A673 (cell line): ENCODE measurements at regions of chr4 and their contacts with region 1.

Region 1: GRCh38 chr4:179076865-179077264 is 1634.6 kb upstream of the AGA start:
- DNase-seq: no peak
- H3K4me3 ChIP-seq: no peak overlapping the region
- H3K27ac ChIP-seq: no peak overlapping the region
- H3K4me1 ChIP-seq: no peaks in the 10 kb centered on the region
- H3K27me3 ChIP-seq: no peaks in the 10 kb centered on the region
- CTCF ChIP-seq: no peak

Region 2: GRCh38 chr4:178356725-178357124 is 720.1 kb before region 1 on chr4:
- CTCF ChIA-PET with region 1: no interaction called
- POLR2A ChIA-PET with region 1: no interaction called
- intact Hi-C with region 1: loop called (anchors 10 kb)
- DNase-seq: no peak
- H3K4me3 ChIP-seq: no peak overlapping the region
- H3K27ac ChIP-seq: no peak overlapping the region
- H3K4me1 ChIP-seq: no peaks in the 10 kb centered on the region
- H3K27me3 ChIP-seq: no peaks in the 10 kb centered on the region
- CTCF ChIP-seq: no peak